ENCODE measurements at regions of chr1 and their contacts with region 1.

Region 1: DNA sequence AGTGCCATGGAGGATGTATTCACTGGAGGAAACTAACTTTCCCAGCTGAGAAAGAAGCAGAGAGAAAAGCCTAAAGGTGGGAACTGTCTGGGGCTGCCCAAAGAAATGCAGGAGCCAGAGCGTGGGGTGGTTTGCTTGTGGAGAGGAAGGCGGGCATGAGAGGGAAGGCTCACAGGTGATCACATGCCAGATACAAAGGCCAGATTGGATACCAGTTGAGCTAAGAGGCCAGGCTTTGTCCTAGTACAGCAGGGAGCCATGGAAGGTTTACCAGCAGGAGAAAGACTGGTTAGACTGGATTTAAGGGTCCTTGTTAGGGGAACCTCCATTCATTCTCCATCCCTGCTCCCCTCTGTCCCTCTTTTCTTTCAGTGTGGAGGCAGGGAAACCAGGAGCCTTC is 66.4 kb downstream of the BEND5 start:
- DNase-seq: no peak
- H3K4me3 ChIP-seq: no peak overlapping the region
- CTCF ChIP-seq: no peak

Region 2: GRCh38 chr1:48480504-48480903 is 229.8 kb before region 1 on chr1:
- CTCF ChIA-PET with region 1: no interaction called
- POLR2A ChIA-PET with region 1: no interaction called
- DNase-seq: no peak
- H3K4me3 ChIP-seq: no peak overlapping the region
- CTCF ChIP-seq: no peak

Region 3: GRCh38 chr1:48697066-48697707 is 13.1 kb before region 1 on chr1:
- CTCF ChIA-PET with region 1: interaction called, 10 read pairs
- POLR2A ChIA-PET with region 1: no interaction called
- DNase-seq: no peak
- H3K4me3 ChIP-seq: no peak overlapping the region
- CTCF ChIP-seq: peak; percentile 85

Measured in AG04449 (cell line).